Dorsolateral prefrontal cortex (tissue), 120 donors: ENCODE measurements at regions of chr9 and their contacts with region 1.

Region 1: GRCh38 chr9:2125906-2126305 is 110.8 kb downstream of the SMARCA2 start:
- DNase-seq: no peak
- H3K4me3 ChIP-seq: peak overlapping the region in 43 of 59 donors; percentile 0 to 52 (median 24)
- H3K27ac ChIP-seq: peak overlapping the region in 55 of 59 donors; percentile 4 to 88 (median 70)
- H3K27me3 ChIP-seq: no peaks in the 10 kb centered on the region
- CTCF ChIP-seq: no peak

Region 2: GRCh38 chr9:2174306-2174705 is 48.4 kb after region 1 on chr9:
- intact Hi-C with region 1: loop called in 1 of 2 experiments (anchors 5 kb)
- DNase-seq: no peak
- H3K4me3 ChIP-seq: no peak overlapping the region
- H3K27ac ChIP-seq: peak overlapping the region in 21 of 59 donors; percentile 0 to 65 (median 24)
- H3K27me3 ChIP-seq: no peaks in the 10 kb centered on the region
- CTCF ChIP-seq: no peak